ENCODE measurements at regions of chr6 and their contacts with region 1.

Region 1: GRCh38 chr6:36615018-36615761 is 21.0 kb downstream of the SRSF3 start:
- DNase-seq: peak; percentile 49
- ATAC-seq: peak; percentile 60
- H3K4me3 Mint-ChIP-seq: no peak overlapping the region
- H3K27ac Mint-ChIP-seq: no peak overlapping the region
- H3K4me1 Mint-ChIP-seq: peaks cover 9% of the 10 kb centered on the region
- H3K27me3 Mint-ChIP-seq: no peaks in the 10 kb centered on the region

Region 2: GRCh38 chr6:36586606-36587005 is 28.6 kb before region 1 on chr6:
- POLR2A ChIA-PET with region 1: no interaction called
- DNase-seq: no peak
- ATAC-seq: no peak
- H3K4me3 Mint-ChIP-seq: no peak overlapping the region
- H3K27ac Mint-ChIP-seq: no peak overlapping the region
- H3K4me1 Mint-ChIP-seq: no peaks in the 10 kb centered on the region
- H3K27me3 Mint-ChIP-seq: peaks cover 4% of the 10 kb centered on the region

Region 3: GRCh38 chr6:36759148-36759759 is 144.1 kb after region 1 on chr6:
- POLR2A ChIA-PET with region 1: interaction called, 10 read pairs
- DNase-seq: peak; percentile 89
- ATAC-seq: peak; percentile 61
- H3K4me3 Mint-ChIP-seq: no peak overlapping the region
- H3K27ac Mint-ChIP-seq: no peak overlapping the region
- H3K4me1 Mint-ChIP-seq: peaks cover 38% of the 10 kb centered on the region
- H3K27me3 Mint-ChIP-seq: no peaks in the 10 kb centered on the region